HCT116 (cell line): ENCODE measurements at regions of chr4 and their contacts with region 1.

Region 1: DNA sequence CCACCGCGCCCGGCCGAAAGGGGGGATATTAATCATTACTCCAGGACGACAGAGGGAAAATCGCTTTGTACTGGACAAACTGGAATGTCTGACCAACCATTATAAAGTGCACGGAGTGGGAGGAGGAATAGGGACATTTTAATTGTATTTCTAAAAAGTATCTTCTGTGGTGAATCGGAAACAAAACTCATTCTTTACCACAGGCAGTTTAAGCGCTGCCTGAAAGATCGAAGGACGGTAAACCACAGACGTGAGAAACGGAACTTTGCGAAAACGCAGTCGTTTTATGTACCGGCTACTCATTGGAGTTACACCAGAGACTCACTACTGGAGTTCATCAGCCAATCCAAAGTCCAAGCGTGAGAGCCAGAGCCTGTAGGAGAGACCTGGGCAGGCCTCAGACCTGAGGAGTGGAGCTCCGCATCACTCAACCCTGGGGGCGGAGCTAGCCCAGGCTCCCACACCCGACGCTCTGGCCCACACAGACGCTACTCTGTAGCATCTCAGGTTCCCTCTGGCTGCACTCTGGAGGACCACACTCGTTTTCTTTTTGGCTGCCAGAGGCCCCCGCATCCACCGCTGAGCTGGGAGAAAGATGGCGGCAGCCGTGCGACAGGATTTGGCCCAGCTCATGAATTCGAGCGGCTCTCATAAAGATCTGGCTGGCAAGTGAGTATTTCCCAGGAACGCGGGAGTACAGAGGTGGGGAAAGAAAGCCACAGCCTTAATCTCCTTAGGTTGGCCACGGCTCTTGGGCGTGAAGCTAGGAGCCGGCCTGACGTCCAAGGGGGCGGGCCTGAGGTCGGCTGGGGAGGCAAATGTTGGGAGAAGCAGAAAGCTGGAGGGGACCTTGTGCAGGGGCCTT is at the start of gene COPS4:
- DNase-seq: peak; percentile 100
- ATAC-seq: peak; percentile 98
- H3K4me3 ChIP-seq: peak within 1 kb of the TSS; percentile 95 to 99
- H3K27ac ChIP-seq: peak within 1 kb of the TSS; percentile 85
- H3K4me1 ChIP-seq: peaks cover 3 to 13% of the 10 kb centered on the region in 2 experiments; a peak in 2 of 4 replicates
- H3K27me3 ChIP-seq: no peaks in the 10 kb centered on the region
- CTCF ChIP-seq: peak in 1 of 3 experiments; percentile 43; a peak in 2 of 6 replicates
- POLR2A ChIP-seq: peak; percentile 72
- RAD21 ChIP-seq: 0 out of 2 replicates have a peak, but pooled peaks have one; percentile 23
- total RNA-seq, gene COPS4: 28.6 TPM

Region 2: DNA sequence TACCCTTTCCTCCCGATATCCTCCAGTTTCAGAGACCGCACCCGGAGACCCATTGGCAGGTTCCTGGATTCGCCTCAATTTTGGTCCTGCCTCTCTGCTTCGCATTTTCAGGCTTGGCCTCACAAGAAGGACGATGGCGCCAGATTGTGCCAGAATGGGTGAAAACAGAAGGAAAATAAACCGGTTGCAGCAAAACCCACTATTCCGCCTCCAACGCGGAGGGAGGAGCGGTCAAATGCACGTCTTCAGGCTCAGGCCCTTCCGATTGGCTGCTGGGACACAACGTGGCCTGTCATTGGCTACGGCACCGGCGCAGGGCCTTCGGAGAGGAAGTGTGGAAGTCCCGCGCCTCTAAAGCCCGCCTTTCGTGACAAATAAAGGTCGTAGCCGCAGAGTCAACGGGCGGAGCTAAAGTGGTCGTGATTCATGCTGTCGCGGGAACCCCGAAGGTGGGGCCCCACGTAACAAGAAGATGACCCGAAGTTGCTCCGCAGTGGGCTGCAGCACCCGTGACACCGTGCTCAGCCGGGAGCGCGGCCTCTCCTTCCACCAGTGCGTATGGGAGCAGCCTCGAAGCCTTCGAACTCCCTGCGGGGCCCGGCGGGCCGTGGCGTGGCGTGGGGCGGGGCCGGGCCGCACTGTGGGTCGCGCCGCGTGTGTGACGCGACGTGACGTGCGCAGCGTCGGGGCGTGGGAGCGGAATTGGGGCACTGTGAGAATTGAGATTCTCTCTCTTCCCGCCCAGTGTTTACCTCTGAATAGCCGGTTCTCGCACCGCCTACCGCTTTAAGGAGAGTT is 134.3 kb before region 1 on chr4 and contains the start of gene THAP9:
- CTCF ChIA-PET with region 1: no interaction called
- POLR2A ChIA-PET with region 1: interaction called, 11 read pairs
- RAD21 ChIA-PET with region 1: no interaction called
- intact Hi-C with region 1: loop called (anchors 2 kb)
- DNase-seq: peak; percentile 99
- ATAC-seq: peak; percentile 95
- H3K4me3 ChIP-seq: peak within 1 kb of the TSS; percentile 93 to 95
- H3K27ac ChIP-seq: peak within 1 kb of the TSS; percentile 87
- H3K4me1 ChIP-seq: peaks cover 6 to 20% of the 10 kb centered on the region in 2 experiments; a peak in 3 of 4 replicates
- H3K27me3 ChIP-seq: no peaks in the 10 kb centered on the region
- CTCF ChIP-seq: no peak
- POLR2A ChIP-seq: peak; percentile 92
- RAD21 ChIP-seq: no peak
- total RNA-seq, gene THAP9: 6.4 TPM

Region 3: GRCh38 chr4:83267121-83267829 is 232.4 kb after region 1 on chr4:
- CTCF ChIA-PET with region 1: no interaction called
- POLR2A ChIA-PET with region 1: no interaction called
- RAD21 ChIA-PET with region 1: no interaction called
- intact Hi-C with region 1: no loop called
- DNase-seq: no peak
- ATAC-seq: no peak
- H3K4me3 ChIP-seq: no peak overlapping the region
- H3K27ac ChIP-seq: no peak overlapping the region
- H3K4me1 ChIP-seq: no peaks in the 10 kb centered on the region
- H3K27me3 ChIP-seq: no peaks in the 10 kb centered on the region
- CTCF ChIP-seq: no peak
- POLR2A ChIP-seq: no peak
- RAD21 ChIP-seq: no peak

Region 4: GRCh38 chr4:83369831-83370639 is 335.2 kb after region 1 on chr4:
- CTCF ChIA-PET with region 1: no interaction called
- POLR2A ChIA-PET with region 1: no interaction called
- RAD21 ChIA-PET with region 1: no interaction called
- intact Hi-C with region 1: no loop called
- DNase-seq: no peak
- ATAC-seq: no peak
- H3K4me3 ChIP-seq: no peak overlapping the region
- H3K27ac ChIP-seq: no peak overlapping the region
- H3K4me1 ChIP-seq: no peaks in the 10 kb centered on the region
- H3K27me3 ChIP-seq: no peaks in the 10 kb centered on the region
- CTCF ChIP-seq: 0 out of 6 replicates have a peak, but pooled peaks of 1 of the 3 experiments have one; percentile 6
- POLR2A ChIP-seq: no peak
- RAD21 ChIP-seq: peak; percentile 43